ENCODE measurements at regions of chr9 and their contacts with region 1.

Region 1: GRCh38 chr9:114291064-114291474 is 31.8 kb upstream of the ORM1 start:
- DNase-seq: peak; percentile 44 to 54 (median 50)
- H3K4me3 ChIP-seq: no peak overlapping the region
- H3K4me3 Mint-ChIP-seq: no peak overlapping the region
- H3K27ac ChIP-seq: no peak overlapping the region
- H3K27ac Mint-ChIP-seq: no peak overlapping the region
- H3K4me1 ChIP-seq: no peaks in the 10 kb centered on the region
- H3K4me1 Mint-ChIP-seq: no peaks in the 10 kb centered on the region
- H3K27me3 ChIP-seq: peaks cover 0 to 8% of the 10 kb centered on the region in 2 donors
- H3K27me3 Mint-ChIP-seq: peaks cover 8 to 16% (median 10%) of the 10 kb centered on the region in 3 donors
- CTCF ChIP-seq: peak; percentile 97

Region 2: GRCh38 chr9:113963017-113963620 is 327.9 kb before region 1 on chr9:
- intact Hi-C with region 1: no loop called
- DNase-seq: peak; percentile 26 to 43 (median 27)
- H3K4me3 ChIP-seq: no peak overlapping the region
- H3K4me3 Mint-ChIP-seq: no peak overlapping the region
- H3K27ac ChIP-seq: no peak overlapping the region
- H3K27ac Mint-ChIP-seq: no peak overlapping the region
- H3K4me1 ChIP-seq: no peaks in the 10 kb centered on the region
- H3K4me1 Mint-ChIP-seq: peaks cover 2% of the 10 kb centered on the region
- H3K27me3 ChIP-seq: no peaks in the 10 kb centered on the region
- H3K27me3 Mint-ChIP-seq: peaks cover 0 to 1% (median 0%) of the 10 kb centered on the region in 3 donors
- CTCF ChIP-seq: peak; percentile 93

Region 3: GRCh38 chr9:114108016-114108833 is 182.8 kb before region 1 on chr9:
- intact Hi-C with region 1: loop called in 1 of 2 experiments (anchors 5 kb)
- DNase-seq: peak; percentile 6 to 25 (median 13)
- H3K4me3 ChIP-seq: no peak overlapping the region
- H3K4me3 Mint-ChIP-seq: no peak overlapping the region
- H3K27ac ChIP-seq: no peak overlapping the region
- H3K27ac Mint-ChIP-seq: peak overlapping the region in 1 of 7 donors; percentile 31
- H3K4me1 ChIP-seq: no peaks in the 10 kb centered on the region
- H3K4me1 Mint-ChIP-seq: no peaks in the 10 kb centered on the region
- H3K27me3 ChIP-seq: peaks cover 0 to 8% of the 10 kb centered on the region in 2 donors
- H3K27me3 Mint-ChIP-seq: peaks cover 9 to 30% (median 10%) of the 10 kb centered on the region in 3 donors
- CTCF ChIP-seq: peak; percentile 79

Region 4: GRCh38 chr9:114155263-114155972 is 135.7 kb before region 1 on chr9 and contains the start of gene COL27A1:
- intact Hi-C with region 1: loop called in 1 of 2 experiments (anchors 5 kb)
- DNase-seq: peak; percentile 41 to 61 (median 42)
- H3K4me3 ChIP-seq: peak within 1 kb of the TSS; percentile 31 to 72 (median 31)
- H3K4me3 Mint-ChIP-seq: peak within 1 kb of the TSS; percentile 75 to 95
- H3K27ac ChIP-seq: no peak within 1 kb of the TSS
- H3K27ac Mint-ChIP-seq: peak within 1 kb of the TSS in 2 of 7 donors; percentile 54 to 64
- H3K4me1 ChIP-seq: peaks cover 0 to 2% of the 10 kb centered on the region in 2 donors
- H3K4me1 Mint-ChIP-seq: peaks cover 10% of the 10 kb centered on the region
- H3K27me3 ChIP-seq: peaks cover 27 to 65% of the 10 kb centered on the region in 2 donors
- H3K27me3 Mint-ChIP-seq: peaks cover 58 to 79% (median 70%) of the 10 kb centered on the region in 3 donors
- CTCF ChIP-seq: peak; percentile 89
- polyA plus RNA-seq, gene COL27A1: 0.03 TPM in 1 of 3 donors, not detected in the others

Region 5: DNA sequence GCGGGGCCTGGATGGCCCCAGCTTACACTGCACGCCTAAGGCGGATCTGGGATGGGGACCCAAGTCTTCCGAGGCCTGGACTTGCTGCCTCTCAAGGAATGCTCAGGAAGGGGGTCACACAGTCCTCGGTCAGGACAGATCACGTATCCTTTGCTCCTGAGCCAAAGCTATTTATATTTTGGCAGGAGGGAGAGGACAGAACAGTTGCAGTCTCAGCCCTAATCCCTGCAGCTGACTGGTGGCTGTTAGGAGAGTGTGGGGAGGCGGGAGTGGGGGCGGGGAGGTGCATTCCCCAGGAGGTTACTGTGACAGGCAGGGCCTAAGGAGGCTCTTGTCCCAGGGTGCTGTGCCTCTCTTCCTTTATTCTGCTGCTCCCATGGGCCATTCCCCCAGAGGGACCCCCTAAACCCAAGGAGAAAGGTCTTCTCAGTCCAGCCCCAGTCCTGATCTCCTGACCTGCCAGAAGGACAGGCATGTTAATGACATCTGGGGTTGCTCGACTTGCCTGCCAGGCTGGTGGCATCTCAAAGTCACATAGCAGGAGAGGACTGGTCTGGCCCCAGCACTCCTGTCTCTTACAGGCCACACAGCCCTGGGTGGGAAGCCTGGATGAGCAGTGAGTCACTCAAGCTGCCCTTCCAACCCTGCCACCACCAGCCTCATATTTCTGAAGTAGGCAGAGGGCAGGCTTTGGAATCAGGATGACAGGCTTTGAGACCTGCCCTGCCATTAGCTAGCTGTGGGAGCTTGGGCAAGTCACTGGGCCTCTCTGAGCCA is 83.8 kb before region 1 on chr9:
- intact Hi-C with region 1: no loop called
- DNase-seq: no peak
- H3K4me3 ChIP-seq: no peak overlapping the region
- H3K4me3 Mint-ChIP-seq: no peak overlapping the region
- H3K27ac ChIP-seq: no peak overlapping the region
- H3K27ac Mint-ChIP-seq: no peak overlapping the region
- H3K4me1 ChIP-seq: peaks cover 10 to 16% of the 10 kb centered on the region in 2 donors
- H3K4me1 Mint-ChIP-seq: peaks cover 16% of the 10 kb centered on the region
- H3K27me3 ChIP-seq: no peaks in the 10 kb centered on the region
- H3K27me3 Mint-ChIP-seq: peaks cover 0 to 2% (median 0%) of the 10 kb centered on the region in 3 donors
- CTCF ChIP-seq: no peak

Measured in CD14-positive monocyte (primary cell).